Transverse colon (tissue), 4 donors: ENCODE measurements at regions of chr5 and their contacts with region 1.

Region 1: GRCh38 chr5:59810041-59810440 is 83.5 kb downstream of the PDE4D start:
- DNase-seq: peak; percentile 76
- H3K4me3 ChIP-seq: peak overlapping the region in 1 of 4 donors; percentile 15
- H3K27ac ChIP-seq: no peak overlapping the region
- H3K4me1 ChIP-seq: peaks cover 0 to 6% (median 2%) of the 10 kb centered on the region in 4 donors
- H3K27me3 ChIP-seq: no peaks in the 10 kb centered on the region
- CTCF ChIP-seq: peak; percentile 83 to 91 (median 89)
- EP300 ChIP-seq: no peak
- POLR2A ChIP-seq: no peak

Region 2: DNA sequence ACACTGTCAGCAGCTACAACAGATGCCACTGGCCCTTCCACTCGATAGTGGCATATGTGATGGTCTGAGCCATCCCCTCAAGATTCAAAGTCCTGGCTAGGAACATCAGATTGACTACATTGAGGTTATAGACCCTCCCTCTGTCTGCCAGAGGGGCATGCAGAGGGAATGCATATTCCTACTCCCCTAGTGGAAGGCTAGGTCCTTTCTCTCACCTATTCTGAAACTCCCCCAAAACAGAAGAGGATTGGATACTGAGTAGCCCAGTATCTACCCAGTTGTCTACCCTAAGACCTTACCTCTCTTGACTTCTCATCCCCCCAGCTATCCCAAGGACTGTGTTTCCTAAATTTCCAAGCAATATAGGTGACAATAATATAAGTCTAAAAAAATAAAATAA is 162.0 kb after region 1 on chr5:
- in situ Hi-C with region 1: no loop called
- intact Hi-C with region 1: no loop called
- DNase-seq: no peak
- H3K4me3 ChIP-seq: no peak overlapping the region
- H3K27ac ChIP-seq: no peak overlapping the region
- H3K4me1 ChIP-seq: no peaks in the 10 kb centered on the region
- H3K27me3 ChIP-seq: no peaks in the 10 kb centered on the region
- CTCF ChIP-seq: no peak
- EP300 ChIP-seq: no peak
- POLR2A ChIP-seq: no peak

Region 3: GRCh38 chr5:60161340-60161934 is 351.4 kb after region 1 on chr5:
- in situ Hi-C with region 1: loop called in 2 of 4 experiments (anchors 25 kb)
- intact Hi-C with region 1: no loop called
- DNase-seq: no peak
- H3K4me3 ChIP-seq: no peak overlapping the region
- H3K27ac ChIP-seq: no peak overlapping the region
- H3K4me1 ChIP-seq: no peaks in the 10 kb centered on the region
- H3K27me3 ChIP-seq: no peaks in the 10 kb centered on the region
- CTCF ChIP-seq: peak in 3 of 5 experiments; percentile 26 to 39 (median 29)
- EP300 ChIP-seq: no peak
- POLR2A ChIP-seq: no peak

Region 4: DNA sequence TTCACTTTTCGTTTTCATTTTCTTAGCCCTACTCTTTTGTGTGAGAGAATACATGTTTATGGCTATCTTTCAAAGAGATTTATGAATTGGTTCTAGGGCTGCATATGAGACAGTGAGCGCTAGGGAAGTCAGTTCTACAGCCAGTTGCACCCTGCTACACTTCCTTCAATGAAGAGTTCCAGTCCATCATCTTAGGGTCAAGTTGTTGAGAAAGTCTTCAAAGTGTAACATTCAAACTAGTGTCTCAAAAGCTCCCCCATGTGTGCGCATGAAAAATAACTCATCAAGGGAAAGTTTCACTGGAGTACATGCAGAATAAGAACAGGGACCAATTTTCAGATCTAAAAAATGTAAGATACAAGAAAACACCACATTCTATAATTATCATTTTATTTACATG is 572.7 kb after region 1 on chr5:
- in situ Hi-C with region 1: loop called in 2 of 4 experiments (anchors 10 to 25 kb)
- intact Hi-C with region 1: loop called (anchors 10 kb)
- DNase-seq: no peak
- H3K4me3 ChIP-seq: no peak overlapping the region
- H3K27ac ChIP-seq: no peak overlapping the region
- H3K4me1 ChIP-seq: no peaks in the 10 kb centered on the region
- H3K27me3 ChIP-seq: no peaks in the 10 kb centered on the region
- CTCF ChIP-seq: peak in 1 of 5 experiments; percentile 8
- EP300 ChIP-seq: no peak
- POLR2A ChIP-seq: no peak

Region 5: DNA sequence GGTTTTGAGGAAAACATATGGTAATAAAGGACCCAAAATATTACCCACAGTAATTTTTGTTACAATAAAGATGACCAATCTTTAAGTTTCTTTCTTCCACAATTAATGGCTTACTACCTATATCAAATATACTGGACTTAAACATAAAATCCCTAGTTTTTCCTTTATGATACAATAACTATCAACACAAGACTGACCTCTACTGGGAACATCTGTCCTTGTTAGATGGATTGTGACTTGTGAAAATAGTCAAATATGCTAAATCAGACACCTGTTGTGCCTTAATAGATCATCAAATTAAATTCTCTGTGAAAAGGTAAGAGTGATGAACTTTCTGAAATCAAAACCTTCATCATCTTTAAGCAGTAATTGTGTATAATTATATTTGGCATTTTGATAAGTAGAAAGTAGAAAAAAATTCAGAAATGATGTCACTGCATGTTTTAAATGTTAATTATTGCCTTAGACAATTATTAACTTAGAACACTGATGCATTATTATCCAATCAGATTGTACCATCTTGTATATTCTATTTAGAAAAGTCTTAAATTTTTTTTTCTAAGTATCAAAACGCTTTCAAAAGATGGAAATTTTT is 776.4 kb after region 1 on chr5:
- in situ Hi-C with region 1: loop called in 2 of 4 experiments (anchors 10 to 25 kb)
- intact Hi-C with region 1: loop called (anchors 10 kb)
- DNase-seq: no peak
- H3K4me3 ChIP-seq: no peak overlapping the region
- H3K27ac ChIP-seq: no peak overlapping the region
- H3K4me1 ChIP-seq: peaks cover 0 to 10% (median 6%) of the 10 kb centered on the region in 4 donors
- H3K27me3 ChIP-seq: no peaks in the 10 kb centered on the region
- CTCF ChIP-seq: peak in 3 of 5 experiments; percentile 24 to 52 (median 34)
- EP300 ChIP-seq: no peak
- POLR2A ChIP-seq: no peak

Region 6: GRCh38 chr5:60649283-60649917 is 839.4 kb after region 1 on chr5:
- in situ Hi-C with region 1: loop called in 1 of 4 experiments (anchors 10 kb)
- intact Hi-C with region 1: loop called (anchors 5 kb)
- DNase-seq: no peak
- H3K4me3 ChIP-seq: no peak overlapping the region
- H3K27ac ChIP-seq: no peak overlapping the region
- H3K4me1 ChIP-seq: no peaks in the 10 kb centered on the region
- H3K27me3 ChIP-seq: no peaks in the 10 kb centered on the region
- CTCF ChIP-seq: peak; percentile 32 to 48 (median 45)
- EP300 ChIP-seq: no peak
- POLR2A ChIP-seq: no peak

Region 7: GRCh38 chr5:60668686-60669304 is 858.8 kb after region 1 on chr5:
- in situ Hi-C with region 1: loop called in 3 of 4 experiments (anchors 5 to 10 kb)
- intact Hi-C with region 1: loop called (anchors 5 kb)
- DNase-seq: no peak
- H3K4me3 ChIP-seq: no peak overlapping the region
- H3K27ac ChIP-seq: no peak overlapping the region
- H3K4me1 ChIP-seq: peaks cover 7 to 31% (median 13%) of the 10 kb centered on the region in 4 donors
- H3K27me3 ChIP-seq: no peaks in the 10 kb centered on the region
- CTCF ChIP-seq: peak; percentile 49 to 74 (median 67)
- EP300 ChIP-seq: no peak
- POLR2A ChIP-seq: no peak